T-cell (primary cell): ENCODE measurements at regions of chr9 and their contacts with region 1.

Region 1: GRCh38 chr9:15501179-15501578 is 9.6 kb downstream of the PSIP1 start:
- DNase-seq: peak in 1 of 35 experiments; percentile 34
- ATAC-seq: peak in 1 of 4 experiments; percentile 46
- H3K4me3 ChIP-seq: no peak overlapping the region
- H3K4me3 Mint-ChIP-seq: peak overlapping the region; percentile 2 to 44 (median 23)
- H3K27ac ChIP-seq: no peak overlapping the region
- H3K27ac Mint-ChIP-seq: peak overlapping the region; percentile 50 to 57
- H3K4me1 ChIP-seq: peaks cover 15 to 26% of the 10 kb centered on the region in 2 experiments
- H3K4me1 Mint-ChIP-seq: peaks cover 73 to 77% (median 74%) of the 10 kb centered on the region in 3 donors
- H3K27me3 ChIP-seq: no peaks in the 10 kb centered on the region
- H3K27me3 Mint-ChIP-seq: no peaks in the 10 kb centered on the region

Region 2: DNA sequence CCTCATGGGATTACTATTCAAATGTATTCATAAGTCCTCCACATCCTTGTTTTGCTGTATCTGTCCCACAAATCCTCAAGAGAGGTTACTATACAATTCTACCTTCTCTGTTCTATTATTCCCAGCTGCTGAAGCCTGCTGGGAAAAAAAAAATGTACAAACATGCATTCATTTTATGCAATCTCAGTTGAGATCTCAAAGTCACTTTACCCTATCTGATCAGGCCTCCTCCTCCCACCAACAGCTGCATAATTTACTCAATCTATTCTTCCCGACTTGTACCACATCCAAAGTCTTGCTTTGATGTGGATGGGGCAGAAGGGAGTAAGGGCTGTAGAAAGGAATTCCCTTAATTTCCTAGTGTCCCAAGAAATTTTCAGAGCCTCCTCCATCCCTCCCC is 19.0 kb before region 1 on chr9:
- CTCF ChIA-PET with region 1: interaction called in 1 of 2 experiments, 6 read pairs
- POLR2A ChIA-PET with region 1: interaction called, 4 to 12 read pairs
- DNase-seq: no peak
- ATAC-seq: no peak
- H3K4me3 ChIP-seq: no peak overlapping the region
- H3K4me3 Mint-ChIP-seq: no peak overlapping the region
- H3K27ac ChIP-seq: no peak overlapping the region
- H3K27ac Mint-ChIP-seq: peak overlapping the region; percentile 36 to 41
- H3K4me1 ChIP-seq: no peaks in the 10 kb centered on the region
- H3K4me1 Mint-ChIP-seq: peaks cover 33 to 49% (median 46%) of the 10 kb centered on the region in 3 donors
- H3K27me3 ChIP-seq: no peaks in the 10 kb centered on the region
- H3K27me3 Mint-ChIP-seq: no peaks in the 10 kb centered on the region

Region 3: GRCh38 chr9:15641291-15641690 is 140.1 kb after region 1 on chr9:
- CTCF ChIA-PET with region 1: interaction called in 1 of 2 experiments, 14 read pairs
- POLR2A ChIA-PET with region 1: no interaction called
- DNase-seq: no peak
- ATAC-seq: no peak
- H3K4me3 ChIP-seq: no peak overlapping the region
- H3K4me3 Mint-ChIP-seq: no peak overlapping the region
- H3K27ac ChIP-seq: no peak overlapping the region
- H3K27ac Mint-ChIP-seq: no peak overlapping the region
- H3K4me1 ChIP-seq: no peaks in the 10 kb centered on the region
- H3K4me1 Mint-ChIP-seq: no peaks in the 10 kb centered on the region
- H3K27me3 ChIP-seq: no peaks in the 10 kb centered on the region
- H3K27me3 Mint-ChIP-seq: peaks cover 0 to 10% of the 10 kb centered on the region in 2 donors